ENCODE measurements at regions of chr7 and their contacts with region 1.

Region 1: GRCh38 chr7:142308326-142308725 is 50.5 kb upstream of the PRSS58 start:
- DNase-seq: no peak
- H3K4me3 ChIP-seq: no peak overlapping the region
- H3K27ac ChIP-seq: no peak overlapping the region
- H3K4me1 ChIP-seq: no peaks in the 10 kb centered on the region
- H3K27me3 ChIP-seq: no peaks in the 10 kb centered on the region
- CTCF ChIP-seq: no peak
- EP300 ChIP-seq: no peak
- POLR2A ChIP-seq: no peak

Region 2: DNA sequence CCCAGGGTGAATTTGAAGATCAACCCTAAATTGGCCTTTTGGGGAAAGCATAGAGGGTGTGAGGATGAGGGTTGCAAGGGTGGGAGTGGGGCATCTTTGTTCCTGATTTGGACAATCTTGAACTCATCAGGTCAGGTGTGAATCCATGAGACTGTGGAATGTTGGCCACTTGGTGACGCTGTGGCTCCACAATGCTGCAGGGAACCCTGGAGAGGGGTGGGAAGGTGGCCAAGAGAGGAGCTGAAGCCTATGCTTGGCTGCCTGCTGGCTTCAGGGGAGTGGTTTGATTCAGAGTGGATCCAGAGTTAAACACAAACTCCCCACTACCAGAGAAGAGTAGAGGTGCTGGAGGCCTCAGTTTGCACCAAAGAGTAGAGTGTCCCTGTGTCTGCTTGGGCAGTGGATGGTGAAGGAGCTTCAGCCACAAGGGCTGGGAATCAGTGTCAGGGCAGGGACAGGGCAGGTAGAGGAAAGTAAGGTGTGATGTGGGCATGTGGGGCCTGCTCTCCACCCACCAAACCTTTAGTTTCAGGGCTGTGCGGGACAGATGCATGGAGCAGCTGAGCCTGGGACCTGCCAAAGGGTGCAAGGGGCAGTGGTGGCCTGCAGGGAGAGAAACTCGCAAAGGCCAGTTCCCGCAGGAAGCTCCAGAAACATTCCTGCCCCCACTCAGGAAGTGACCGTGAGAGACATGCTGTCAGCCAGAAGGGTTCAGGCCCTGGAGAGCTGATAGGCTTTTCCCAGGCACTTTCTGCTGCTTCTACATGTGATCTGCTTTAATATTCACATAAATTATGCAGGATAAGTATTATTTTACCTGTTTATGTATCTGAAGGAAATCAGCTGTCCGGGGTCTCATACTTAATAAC is 30.5 kb after region 1 on chr7:
- intact Hi-C with region 1: loop called (anchors 2 kb)
- DNase-seq: no peak
- H3K4me3 ChIP-seq: no peak overlapping the region
- H3K27ac ChIP-seq: no peak overlapping the region
- H3K4me1 ChIP-seq: no peaks in the 10 kb centered on the region
- H3K27me3 ChIP-seq: no peaks in the 10 kb centered on the region
- CTCF ChIP-seq: no peak
- EP300 ChIP-seq: no peak
- POLR2A ChIP-seq: no peak

Region 3: GRCh38 chr7:142357953-142358520 is 49.7 kb after region 1 on chr7:
- intact Hi-C with region 1: no loop called
- DNase-seq: no peak
- H3K4me3 ChIP-seq: no peak overlapping the region
- H3K27ac ChIP-seq: no peak overlapping the region
- H3K4me1 ChIP-seq: no peaks in the 10 kb centered on the region
- H3K27me3 ChIP-seq: no peaks in the 10 kb centered on the region
- CTCF ChIP-seq: peak in 2 of 4 experiments; percentile 18 to 44
- EP300 ChIP-seq: no peak
- POLR2A ChIP-seq: no peak

Region 4: DNA sequence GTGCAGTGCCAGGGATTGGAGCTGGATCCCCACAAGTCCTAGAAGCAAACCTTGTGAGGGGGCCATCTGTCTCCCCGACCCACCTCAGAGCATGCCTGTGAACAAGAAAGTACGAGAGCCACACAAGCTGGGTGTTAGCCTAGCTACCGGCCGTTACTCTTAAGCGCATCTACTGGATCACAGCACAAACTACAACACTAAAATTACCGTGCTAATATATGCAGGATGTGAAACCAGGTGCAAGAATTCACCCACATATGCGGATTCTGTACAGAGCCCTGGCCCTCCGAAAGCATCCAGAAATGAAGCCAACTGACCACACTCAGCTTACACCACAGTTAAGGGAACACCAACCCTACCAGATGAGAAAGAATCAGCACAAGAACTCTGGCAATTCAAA is 424.9 kb after region 1 on chr7:
- intact Hi-C with region 1: no loop called
- DNase-seq: no peak
- H3K4me3 ChIP-seq: no peak overlapping the region
- H3K27ac ChIP-seq: no peak overlapping the region
- H3K4me1 ChIP-seq: no peaks in the 10 kb centered on the region
- H3K27me3 ChIP-seq: no peaks in the 10 kb centered on the region
- CTCF ChIP-seq: no peak
- EP300 ChIP-seq: no peak
- POLR2A ChIP-seq: no peak

Measured in sigmoid colon (tissue), 7 donors.